B cell (primary cell): ENCODE measurements at regions of chr7 and their contacts with region 1.

Region 1: DNA sequence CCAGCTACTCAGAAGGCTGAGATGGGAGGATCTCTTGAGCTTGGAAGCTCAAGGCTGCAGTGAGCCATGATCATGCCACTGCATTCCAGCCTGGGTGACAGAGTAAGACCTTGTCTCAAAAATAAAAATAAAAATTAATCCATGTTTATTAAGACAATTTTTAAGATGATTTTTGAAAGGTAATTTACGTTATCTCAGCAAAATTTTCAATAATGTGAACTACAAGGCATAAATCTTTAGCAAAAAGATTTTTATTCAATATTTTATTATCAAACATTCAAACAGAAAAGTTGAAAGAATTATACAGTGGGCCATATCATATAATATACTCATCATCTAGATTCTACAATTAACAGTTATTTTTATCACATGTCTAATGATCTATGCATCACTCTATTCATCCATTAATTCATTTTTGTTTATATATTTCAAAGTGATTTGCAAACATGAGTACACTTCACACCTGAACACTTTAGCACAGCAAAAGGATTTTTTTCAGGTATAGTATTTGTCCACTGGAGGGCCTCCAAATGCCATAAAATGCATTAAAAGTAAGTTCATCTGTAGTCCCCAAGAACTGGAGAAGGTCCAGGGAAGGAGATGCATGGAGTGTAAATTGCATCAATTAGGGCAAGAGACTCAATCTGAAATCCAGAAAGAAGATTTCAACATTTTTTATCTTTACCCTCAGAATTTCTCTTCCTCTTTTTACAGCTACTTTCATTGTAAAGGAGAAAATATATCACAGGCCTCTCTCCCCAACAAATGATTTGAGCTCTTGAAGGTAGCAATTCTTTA is 38.6 kb upstream of the RSBN1L start:
- DNase-seq: peak; percentile 54
- ATAC-seq: peak; percentile 39
- H3K4me3 ChIP-seq: no peak overlapping the region
- H3K4me3 Mint-ChIP-seq: no peak overlapping the region
- H3K27ac ChIP-seq: no peak overlapping the region
- H3K27ac Mint-ChIP-seq: no peak overlapping the region
- H3K4me1 ChIP-seq: no peaks in the 10 kb centered on the region
- H3K4me1 Mint-ChIP-seq: no peaks in the 10 kb centered on the region
- H3K27me3 ChIP-seq: no peaks in the 10 kb centered on the region
- H3K27me3 Mint-ChIP-seq: no peaks in the 10 kb centered on the region
- CTCF ChIP-seq: peak; percentile 63

Region 2: DNA sequence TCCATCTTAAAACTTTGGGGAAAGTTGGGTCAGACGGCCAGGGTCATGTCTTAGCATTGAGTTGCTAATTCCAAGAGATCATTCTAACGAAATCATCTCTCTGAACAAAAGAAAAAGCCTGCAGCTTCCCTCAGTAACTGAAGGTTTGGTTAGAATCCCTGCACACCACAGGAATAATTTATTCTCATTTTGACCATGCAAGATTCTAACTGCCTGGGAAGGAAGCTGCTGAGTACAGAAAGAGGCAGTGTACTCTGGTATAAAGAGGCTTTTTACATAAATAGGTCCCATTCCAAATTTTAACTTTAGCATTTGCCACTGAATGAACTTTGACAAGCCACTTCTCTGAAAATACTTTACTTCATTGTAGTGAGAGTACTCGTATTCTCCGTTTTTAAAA is 38.3 kb before region 1 on chr7:
- CTCF ChIA-PET with region 1: no interaction called
- POLR2A ChIA-PET with region 1: no interaction called
- intact Hi-C with region 1: no loop called
- DNase-seq: no peak
- ATAC-seq: no peak
- H3K4me3 ChIP-seq: no peak overlapping the region
- H3K4me3 Mint-ChIP-seq: no peak overlapping the region
- H3K27ac ChIP-seq: no peak overlapping the region
- H3K27ac Mint-ChIP-seq: no peak overlapping the region
- H3K4me1 ChIP-seq: no peaks in the 10 kb centered on the region
- H3K4me1 Mint-ChIP-seq: no peaks in the 10 kb centered on the region
- H3K27me3 ChIP-seq: no peaks in the 10 kb centered on the region
- H3K27me3 Mint-ChIP-seq: no peaks in the 10 kb centered on the region
- CTCF ChIP-seq: no peak

Region 3: DNA sequence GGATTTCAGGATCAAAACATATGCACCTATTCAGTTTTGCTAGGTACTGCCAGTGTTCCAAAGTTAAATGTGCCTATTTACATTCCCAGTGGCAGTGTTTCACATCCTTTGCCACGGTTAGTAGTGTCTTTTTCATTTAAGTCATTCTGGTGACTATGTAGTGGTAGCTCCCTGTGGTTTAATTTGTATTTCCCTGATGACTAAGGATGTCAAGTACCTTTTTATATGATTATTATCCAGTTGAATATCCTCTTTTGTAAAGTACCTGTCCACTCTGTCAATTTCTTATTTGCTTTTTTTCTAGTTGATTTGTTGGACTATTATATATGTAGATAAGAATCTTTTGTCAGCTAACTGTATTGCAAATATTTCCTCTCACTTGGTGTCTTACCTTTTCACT is 95.5 kb after region 1 on chr7:
- CTCF ChIA-PET with region 1: interaction called, 51 read pairs
- POLR2A ChIA-PET with region 1: no interaction called
- intact Hi-C with region 1: no loop called
- DNase-seq: no peak
- ATAC-seq: no peak
- H3K4me3 ChIP-seq: no peak overlapping the region
- H3K4me3 Mint-ChIP-seq: no peak overlapping the region
- H3K27ac ChIP-seq: peak overlapping the region in 1 of 2 donors; percentile 13
- H3K27ac Mint-ChIP-seq: no peak overlapping the region
- H3K4me1 ChIP-seq: peaks cover 9 to 13% of the 10 kb centered on the region in 2 donors
- H3K4me1 Mint-ChIP-seq: peaks cover 24% of the 10 kb centered on the region
- H3K27me3 ChIP-seq: no peaks in the 10 kb centered on the region
- H3K27me3 Mint-ChIP-seq: no peaks in the 10 kb centered on the region
- CTCF ChIP-seq: no peak

Region 4: GRCh38 chr7:77940647-77941046 is 283.0 kb after region 1 on chr7:
- CTCF ChIA-PET with region 1: interaction called, 17 read pairs
- POLR2A ChIA-PET with region 1: no interaction called
- intact Hi-C with region 1: loop called (anchors 5 kb)
- DNase-seq: peak; percentile 15
- ATAC-seq: no peak
- H3K4me3 ChIP-seq: no peak overlapping the region
- H3K4me3 Mint-ChIP-seq: no peak overlapping the region
- H3K27ac ChIP-seq: no peak overlapping the region
- H3K27ac Mint-ChIP-seq: no peak overlapping the region
- H3K4me1 ChIP-seq: peaks cover under 1 to 3% of the 10 kb centered on the region in 2 donors
- H3K4me1 Mint-ChIP-seq: peaks cover 14% of the 10 kb centered on the region
- H3K27me3 ChIP-seq: no peaks in the 10 kb centered on the region
- H3K27me3 Mint-ChIP-seq: no peaks in the 10 kb centered on the region
- CTCF ChIP-seq: peak; percentile 73